Caco-2 (cell line): ENCODE measurements at regions of chr20 and their contacts with region 1.

Region 1: GRCh38 chr20:37288091-37288490 is 1.4 kb upstream of the MANBAL start:
- DNase-seq: no peak
- H3K4me3 ChIP-seq: no peak overlapping the region
- H3K4me3 Mint-ChIP-seq: peak overlapping the region; percentile 86
- H3K27ac Mint-ChIP-seq: no peak overlapping the region
- H3K4me1 ChIP-seq: peaks cover 20% of the 10 kb centered on the region
- H3K4me1 Mint-ChIP-seq: peaks cover 7% of the 10 kb centered on the region
- H3K27me3 ChIP-seq: no peaks in the 10 kb centered on the region
- H3K27me3 Mint-ChIP-seq: no peaks in the 10 kb centered on the region
- CTCF ChIP-seq: no peak

Region 2: DNA sequence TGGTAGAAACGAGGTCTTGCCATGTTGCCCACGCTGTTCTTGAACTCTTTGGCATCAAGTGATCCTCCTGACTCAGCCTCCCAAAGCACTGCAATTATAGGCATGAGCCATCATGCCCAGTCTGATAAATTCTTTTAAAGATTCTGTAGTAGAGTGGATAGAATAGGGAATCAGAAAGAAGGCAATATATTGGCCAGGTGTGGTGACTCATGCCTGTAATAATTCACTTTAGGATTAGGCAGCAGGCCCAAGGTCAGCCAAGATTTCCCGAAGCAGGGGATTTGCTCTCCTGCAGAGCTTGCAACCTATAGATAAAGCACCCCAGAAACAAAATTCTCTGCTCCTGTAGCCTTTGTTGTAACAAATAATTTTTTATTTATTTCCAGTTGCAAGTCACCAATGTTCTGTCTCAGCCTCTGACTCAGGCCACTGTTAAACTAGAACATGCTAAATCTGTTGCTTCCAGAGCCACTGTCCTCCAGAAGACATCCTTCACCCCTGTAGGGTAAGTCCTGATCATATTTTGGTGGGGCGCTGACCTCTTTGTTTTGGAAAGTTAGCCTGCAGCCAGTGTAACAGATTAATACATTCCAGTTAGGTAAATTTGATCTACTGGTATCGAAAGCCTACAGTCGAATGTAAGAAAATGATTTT is 78.3 kb before region 1 on chr20:
- CTCF ChIA-PET with region 1: no interaction called
- POLR2A ChIA-PET with region 1: no interaction called
- intact Hi-C with region 1: no loop called
- DNase-seq: no peak
- H3K4me3 ChIP-seq: no peak overlapping the region
- H3K4me3 Mint-ChIP-seq: no peak overlapping the region
- H3K27ac Mint-ChIP-seq: no peak overlapping the region
- H3K4me1 ChIP-seq: peaks cover 7% of the 10 kb centered on the region; the same call in 1 of the 2 replicates
- H3K4me1 Mint-ChIP-seq: no peaks in the 10 kb centered on the region
- H3K27me3 ChIP-seq: no peaks in the 10 kb centered on the region
- H3K27me3 Mint-ChIP-seq: no peaks in the 10 kb centered on the region
- CTCF ChIP-seq: no peak

Region 3: DNA sequence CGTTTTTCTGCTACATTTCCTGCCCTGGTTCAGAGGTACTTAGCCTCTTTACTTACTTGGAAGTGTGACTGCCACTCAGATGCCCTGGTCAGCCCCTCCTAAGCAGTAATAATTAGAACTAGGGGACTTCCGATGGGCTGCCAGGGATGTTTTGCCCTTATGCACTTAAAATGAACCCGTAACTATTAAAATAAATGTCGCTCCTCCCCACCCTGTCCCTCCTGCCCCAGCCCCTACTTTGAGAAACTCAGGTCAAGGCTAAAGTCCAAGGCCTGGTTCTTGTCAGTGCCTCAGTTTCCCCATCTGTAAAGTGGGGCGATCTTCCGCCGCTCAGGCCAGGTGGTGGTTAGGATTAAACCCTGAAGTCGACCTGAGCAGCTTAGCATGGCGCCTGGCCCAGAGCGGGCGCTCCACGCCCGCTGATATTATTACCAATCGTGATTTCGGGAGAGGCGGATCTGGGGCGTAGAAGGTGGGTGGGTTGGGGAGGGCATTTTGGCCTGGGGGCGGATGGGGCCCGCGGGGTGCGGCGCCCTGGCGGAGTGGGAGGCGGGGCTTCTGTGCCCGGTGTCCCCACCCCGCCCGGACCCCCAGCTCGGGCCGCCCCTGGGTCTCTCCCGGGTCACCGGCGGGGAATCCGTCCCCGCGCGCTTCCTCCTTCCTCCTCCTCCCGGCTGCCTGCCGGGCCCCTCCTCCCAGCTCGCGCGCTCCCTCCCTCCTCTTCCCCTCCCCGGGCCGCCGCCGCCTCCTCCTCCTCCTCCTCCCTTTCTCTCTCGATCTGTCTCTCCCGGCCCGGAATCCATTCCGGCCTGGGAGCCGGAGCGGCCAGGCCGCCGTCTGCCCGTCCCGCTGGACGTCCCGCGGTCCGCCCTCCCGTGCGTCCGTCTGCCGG is 57.5 kb after region 1 on chr20 and contains the start of gene SRC:
- CTCF ChIA-PET with region 1: interaction called, 3 read pairs
- POLR2A ChIA-PET with region 1: interaction called, 45 read pairs
- intact Hi-C with region 1: loop called (anchors 1 kb)
- DNase-seq: peak in 1 of 2 experiments; percentile 73
- H3K4me3 ChIP-seq: peak within 1 kb of the TSS; percentile 46
- H3K4me3 Mint-ChIP-seq: peak within 1 kb of the TSS; percentile 90
- H3K27ac Mint-ChIP-seq: peak within 1 kb of the TSS; percentile 98
- H3K4me1 ChIP-seq: peaks cover 50% of the 10 kb centered on the region
- H3K4me1 Mint-ChIP-seq: peaks cover 41% of the 10 kb centered on the region
- H3K27me3 ChIP-seq: no peaks in the 10 kb centered on the region
- H3K27me3 Mint-ChIP-seq: no peaks in the 10 kb centered on the region
- CTCF ChIP-seq: no peak
- total RNA-seq, gene SRC: 197 and 222 TPM in 2 replicates